ENCODE measurements at regions of chr5 and their contacts with region 1.

Region 1: GRCh38 chr5:36739751-36740221 is 133.4 kb downstream of the SLC1A3 start:
- DNase-seq: peak; percentile 48 to 50
- ATAC-seq: peak in 6 of 8 donors; percentile 48 to 60 (median 53)
- H3K4me3 ChIP-seq: no peak overlapping the region
- H3K27ac ChIP-seq: no peak overlapping the region
- H3K4me1 ChIP-seq: peaks cover 0 to 18% (median 7%) of the 10 kb centered on the region in 9 donors
- H3K27me3 ChIP-seq: peaks cover 0 to 24% (median 12%) of the 10 kb centered on the region in 7 donors
- CTCF ChIP-seq: peak; percentile 37 to 87 (median 69)

Region 2: GRCh38 chr5:35683466-35683865 is 1056.3 kb before region 1 on chr5:
- intact Hi-C with region 1: loop called in 1 of 10 experiments (anchors 10 kb)
- DNase-seq: no peak
- ATAC-seq: no peak
- H3K4me3 ChIP-seq: no peak overlapping the region
- H3K27ac ChIP-seq: no peak overlapping the region
- H3K4me1 ChIP-seq: peaks cover 0 to 8% (median 0%) of the 10 kb centered on the region in 9 donors
- H3K27me3 ChIP-seq: no peaks in the 10 kb centered on the region
- CTCF ChIP-seq: no peak

Region 3: DNA sequence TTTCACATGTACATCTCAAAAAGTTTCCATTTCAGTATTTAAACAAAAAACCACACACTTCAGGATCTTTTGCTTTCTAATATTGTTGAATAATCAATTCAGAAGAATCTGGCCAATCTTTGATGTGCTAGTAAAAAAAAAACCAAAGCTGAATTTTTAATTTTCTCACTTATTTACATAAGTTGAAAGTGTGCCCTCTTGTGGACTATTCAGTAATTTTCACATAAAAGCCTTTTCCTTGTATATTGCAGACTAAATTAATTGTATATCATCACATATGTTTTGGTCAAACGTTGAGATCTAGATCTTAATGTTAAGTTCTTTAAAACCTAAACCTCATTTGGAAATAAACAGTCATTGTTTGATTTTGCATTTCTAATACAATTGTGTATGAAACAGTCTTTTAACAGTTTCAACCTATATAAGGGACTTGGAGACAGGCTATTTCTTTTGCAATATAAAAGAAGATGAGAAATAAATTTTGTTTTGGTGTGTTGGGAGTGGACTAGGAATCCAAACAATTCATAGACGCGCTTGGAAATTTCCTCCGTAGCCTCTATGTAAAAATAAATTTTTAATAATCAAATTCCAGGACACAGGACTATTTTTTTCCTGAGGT is 204.9 kb after region 1 on chr5:
- intact Hi-C with region 1: loop called in 1 of 10 experiments (anchors 10 kb)
- DNase-seq: no peak
- ATAC-seq: no peak
- H3K4me3 ChIP-seq: no peak overlapping the region
- H3K27ac ChIP-seq: no peak overlapping the region
- H3K4me1 ChIP-seq: peaks cover 5 to 74% (median 52%) of the 10 kb centered on the region in 9 donors
- H3K27me3 ChIP-seq: no peaks in the 10 kb centered on the region
- CTCF ChIP-seq: peak; percentile 33 to 75 (median 64)

Measured in heart right ventricle (tissue), 16 donors.